Activated CD8-positive, alpha-beta memory T cell treated with anti-CD3 and anti-CD28 coated beads, Interleukin-2, amount 10 ng/mL, durations not matched to agents 7 days and 5 days (primary cell): ENCODE measurements at regions of chr2 and their contacts with region 1.

Region 1: GRCh38 chr2:121076885-121077549 is 208.0 kb downstream of the TFCP2L1 start:
- DNase-seq: peak; percentile 76
- ATAC-seq: peak; percentile 43
- H3K4me3 Mint-ChIP-seq: no peak overlapping the region
- H3K27ac Mint-ChIP-seq: no peak overlapping the region
- H3K4me1 Mint-ChIP-seq: no peaks in the 10 kb centered on the region
- H3K27me3 Mint-ChIP-seq: peaks cover 25% of the 10 kb centered on the region

Region 2: DNA sequence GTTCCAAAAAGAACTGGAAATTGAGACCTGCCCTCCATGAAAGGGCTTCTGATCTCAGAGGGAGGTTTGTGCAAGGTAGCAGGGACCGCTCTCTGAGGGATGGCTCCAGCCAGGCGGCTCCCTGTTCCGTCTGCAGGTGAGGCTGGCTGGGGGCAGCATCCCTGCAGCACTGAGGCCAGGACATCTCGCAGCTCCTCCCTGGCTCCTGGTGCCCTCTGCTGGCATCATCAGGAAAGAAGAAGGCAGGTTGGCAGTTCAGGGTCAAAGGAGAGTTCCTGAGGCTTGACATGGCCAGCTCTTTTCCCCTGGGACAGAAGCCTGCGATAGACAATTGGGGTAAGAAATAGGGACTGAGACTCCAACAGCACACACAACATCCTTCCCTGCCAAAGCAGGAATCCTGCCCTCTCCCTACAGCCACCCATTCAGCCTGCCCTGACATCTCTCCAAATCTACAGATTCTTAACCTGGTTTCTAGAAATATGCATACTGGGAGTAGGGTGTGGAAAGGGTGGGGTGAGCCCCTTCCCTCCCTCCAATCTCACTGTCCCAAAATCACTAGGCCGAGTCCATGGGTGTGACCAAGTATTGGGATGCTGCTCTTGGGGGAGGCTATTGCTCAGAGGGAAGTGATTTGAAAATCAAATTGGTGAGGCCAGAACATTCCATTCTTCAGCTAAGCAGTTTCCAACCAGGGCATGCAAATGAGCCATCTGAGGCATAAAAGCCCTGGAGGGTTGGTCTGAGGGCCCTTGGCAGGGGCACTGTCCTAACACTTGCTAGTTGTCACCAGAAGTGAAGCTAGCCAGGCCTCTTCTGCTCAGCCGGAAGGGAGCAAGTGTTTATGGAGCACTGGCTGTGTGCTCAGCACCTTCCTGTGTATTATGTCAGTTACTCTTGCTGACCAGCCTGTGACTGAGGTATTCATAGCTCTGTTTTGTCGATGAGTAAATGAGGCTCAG is 22.6 kb after region 1 on chr2:
- CTCF ChIA-PET with region 1: interaction called, 19 read pairs
- DNase-seq: no peak
- ATAC-seq: no peak
- H3K4me3 Mint-ChIP-seq: no peak overlapping the region
- H3K27ac Mint-ChIP-seq: no peak overlapping the region
- H3K4me1 Mint-ChIP-seq: no peaks in the 10 kb centered on the region
- H3K27me3 Mint-ChIP-seq: peaks cover 4% of the 10 kb centered on the region